HEK293T (cell line): ENCODE measurements at regions of chr10 and their contacts with region 1.

Region 1: GRCh38 chr10:121069061-121069850 is 218.1 kb downstream of the WDR11 start:
- DNase-seq: no peak

Region 2: DNA sequence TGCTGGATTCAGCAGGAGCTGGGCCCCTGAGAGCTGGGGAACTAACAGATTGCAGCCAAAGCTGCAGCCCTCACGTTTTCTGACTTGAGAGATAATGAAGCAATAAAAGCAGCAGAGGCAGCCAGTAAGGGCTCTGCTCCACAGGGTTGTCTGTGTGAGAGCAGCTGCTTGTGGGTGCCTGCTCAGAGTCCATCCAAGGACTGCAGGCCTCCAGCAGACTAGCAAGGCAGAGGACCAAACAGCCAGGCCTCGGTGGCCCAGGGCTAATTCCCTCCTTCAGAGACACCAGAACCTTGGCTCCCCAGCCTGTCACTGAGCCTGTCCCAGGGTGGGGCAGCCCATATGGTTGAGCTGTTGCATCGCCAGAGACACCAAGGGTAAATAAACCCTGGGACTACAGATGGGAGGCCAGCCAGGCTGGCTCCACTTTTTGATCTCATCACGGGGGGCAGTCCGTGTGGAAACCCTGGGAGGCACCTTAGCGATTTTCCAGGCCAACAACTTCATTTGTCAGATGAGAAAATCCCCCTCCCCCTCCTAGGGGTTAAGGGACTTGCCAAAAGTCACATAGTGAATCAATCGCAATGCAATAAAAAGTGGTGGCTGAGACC is 11.1 kb after region 1 on chr10:
- CTCF ChIA-PET with region 1: interaction called, 12 read pairs
- POLR2A ChIA-PET with region 1: no interaction called
- DNase-seq: peak; percentile 50

Region 3: GRCh38 chr10:121112579-121113386 is 43.5 kb after region 1 on chr10:
- CTCF ChIA-PET with region 1: no interaction called
- POLR2A ChIA-PET with region 1: no interaction called
- DNase-seq: peak; percentile 39

Region 4: GRCh38 chr10:121284936-121285335 is 215.7 kb after region 1 on chr10:
- CTCF ChIA-PET with region 1: no interaction called
- POLR2A ChIA-PET with region 1: no interaction called
- DNase-seq: no peak